Heart right ventricle (tissue), 16 donors: ENCODE measurements at regions of chr3 and their contacts with region 1.

Region 1: DNA sequence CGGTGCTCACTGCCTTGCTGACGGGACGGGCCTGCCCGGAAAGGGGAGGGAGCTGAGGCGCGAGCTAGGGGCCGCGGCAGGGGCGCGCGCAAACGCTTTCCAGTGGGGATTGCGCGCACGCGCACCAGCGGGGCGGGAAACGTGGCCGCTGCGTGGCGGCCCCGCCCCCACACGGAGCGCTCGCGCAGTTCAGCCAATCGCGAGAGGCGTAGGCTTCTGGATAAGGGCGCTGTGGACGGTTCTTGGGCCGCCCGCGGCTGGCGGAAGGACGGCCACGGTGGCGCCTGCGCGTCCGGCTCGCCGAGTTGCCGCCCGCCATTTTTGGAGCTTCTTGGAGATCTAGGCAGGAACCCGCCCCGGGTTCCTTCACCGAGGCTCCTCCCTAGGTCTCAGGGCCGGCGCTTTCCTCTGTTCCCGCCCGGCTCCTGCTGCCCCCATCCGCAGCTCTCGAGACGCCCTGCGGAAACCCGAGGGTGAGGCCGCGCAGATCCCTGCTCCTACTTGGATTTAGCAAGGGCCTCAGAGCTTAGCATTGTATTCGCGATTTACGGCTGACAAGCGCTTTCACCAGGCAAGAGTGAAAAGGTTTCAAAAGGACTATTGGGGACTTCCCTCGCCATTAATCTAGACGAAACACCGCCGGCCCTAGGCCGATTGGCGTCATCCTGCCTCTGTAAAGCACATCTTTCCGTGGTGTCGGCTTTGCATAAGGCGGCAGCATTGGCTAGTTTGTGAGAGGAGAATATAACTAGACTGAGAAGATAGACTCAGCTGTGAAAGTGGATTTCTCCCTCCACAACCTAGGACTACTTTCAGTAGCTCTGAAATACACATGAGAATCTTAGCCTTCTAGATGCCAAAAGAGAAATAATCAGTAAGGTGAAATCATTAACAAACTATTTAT is 496 bp upstream of the STAG1 start:
- DNase-seq: peak; percentile 98 to 99
- ATAC-seq: peak; percentile 94 to 99 (median 96)
- H3K4me3 ChIP-seq: peak overlapping the region; percentile 33 to 94 (median 71)
- H3K27ac ChIP-seq: peak overlapping the region; percentile 96 to 99 (median 98)
- H3K4me1 ChIP-seq: peaks cover 4 to 40% (median 30%) of the 10 kb centered on the region in 9 donors
- H3K27me3 ChIP-seq: no peaks in the 10 kb centered on the region
- CTCF ChIP-seq: peak in 4 of 9 donors; percentile 20 to 54 (median 46)

Region 2: GRCh38 chr3:135918580-135918962 is 834.1 kb before region 1 on chr3:
- intact Hi-C with region 1: loop called in 1 of 10 experiments (anchors 10 kb)
- DNase-seq: no peak
- ATAC-seq: peak in 5 of 8 donors; percentile 42 to 74 (median 66)
- H3K4me3 ChIP-seq: no peak overlapping the region
- H3K27ac ChIP-seq: no peak overlapping the region
- H3K4me1 ChIP-seq: peaks cover 0 to 10% (median 0%) of the 10 kb centered on the region in 9 donors
- H3K27me3 ChIP-seq: no peaks in the 10 kb centered on the region
- CTCF ChIP-seq: peak; percentile 20 to 66 (median 48)

Region 3: DNA sequence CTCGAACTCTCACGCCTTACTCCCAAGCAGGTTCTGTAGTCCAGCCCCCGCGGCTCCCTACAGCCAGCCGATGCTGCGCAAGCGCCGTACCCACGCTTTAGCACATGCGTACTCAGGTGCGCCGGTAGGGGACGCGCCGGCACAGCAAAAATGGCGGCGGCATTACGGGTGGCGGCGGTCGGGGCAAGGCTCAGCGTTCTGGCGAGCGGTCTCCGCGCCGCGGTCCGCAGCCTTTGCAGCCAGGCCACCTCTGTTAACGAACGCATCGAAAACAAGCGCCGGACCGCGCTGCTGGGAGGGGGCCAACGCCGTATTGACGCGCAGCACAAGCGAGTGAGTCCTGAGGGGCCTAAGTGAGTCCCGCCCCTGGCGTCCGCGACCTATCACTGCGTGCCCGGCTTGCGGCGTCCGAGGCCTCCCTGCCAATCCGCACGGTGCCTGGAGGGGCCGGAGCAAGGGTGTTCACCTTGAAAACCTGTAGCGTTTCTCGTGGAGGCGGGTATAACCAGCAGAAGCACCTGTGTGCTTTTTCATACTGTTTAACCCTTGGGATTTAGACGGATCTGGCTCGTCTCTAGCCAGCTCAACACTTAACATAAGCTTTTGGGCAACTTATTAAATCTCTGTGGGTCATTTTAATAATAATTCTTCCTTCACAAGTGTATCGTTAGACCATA is 502.3 kb before region 1 on chr3 and contains the start of gene PCCB:
- intact Hi-C with region 1: loop called in 2 of 10 experiments (anchors 5 to 10 kb)
- DNase-seq: peak; percentile 92 to 95
- ATAC-seq: peak; percentile 97 to 99 (median 99)
- H3K4me3 ChIP-seq: peak within 1 kb of the TSS; percentile 29 to 82 (median 70)
- H3K27ac ChIP-seq: peak within 1 kb of the TSS; percentile 66 to 95 (median 91)
- H3K4me1 ChIP-seq: peaks cover 0 to 23% (median 14%) of the 10 kb centered on the region in 9 donors
- H3K27me3 ChIP-seq: no peaks in the 10 kb centered on the region
- CTCF ChIP-seq: peak; percentile 65 to 96 (median 84)
- total RNA-seq, gene PCCB: 78.6 to 163 (median 132) TPM

Region 4: DNA sequence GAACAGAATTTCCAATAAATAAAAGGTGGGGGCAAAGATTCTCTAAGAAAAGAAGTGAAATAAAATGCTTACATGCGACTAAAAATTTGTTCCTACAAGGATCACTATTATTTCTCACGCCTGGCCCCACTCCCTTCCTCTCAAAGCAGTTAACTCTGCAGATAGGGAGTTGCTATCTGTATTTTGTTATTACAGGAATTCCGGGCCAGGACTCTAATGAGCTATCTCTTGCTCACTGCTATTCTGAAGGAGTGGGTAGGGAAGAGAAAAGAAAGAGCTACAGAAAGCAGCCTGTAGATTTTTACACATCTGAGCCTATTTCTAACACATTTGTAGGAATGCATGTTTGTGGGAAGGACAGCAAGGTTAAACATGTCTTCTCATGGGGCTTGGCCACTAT is 362.1 kb before region 1 on chr3:
- intact Hi-C with region 1: loop called in 9 of 10 experiments (anchors 1 to 10 kb)
- DNase-seq: no peak
- ATAC-seq: peak in 4 of 8 donors; percentile 25 to 69 (median 56)
- H3K4me3 ChIP-seq: no peak overlapping the region
- H3K27ac ChIP-seq: no peak overlapping the region
- H3K4me1 ChIP-seq: peaks cover 0 to 20% (median 0%) of the 10 kb centered on the region in 9 donors
- H3K27me3 ChIP-seq: no peaks in the 10 kb centered on the region
- CTCF ChIP-seq: no peak

Region 5: GRCh38 chr3:136818769-136819391 is 66.2 kb after region 1 on chr3 and contains the start of gene SLC35G2:
- intact Hi-C with region 1: loop called in 2 of 10 experiments (anchors 5 kb)
- DNase-seq: peak; percentile 61 to 72
- ATAC-seq: peak; percentile 75 to 93 (median 88)
- H3K4me3 ChIP-seq: peak within 1 kb of the TSS; percentile 59 to 77 (median 72)
- H3K27ac ChIP-seq: peak within 1 kb of the TSS; percentile 80 to 93 (median 90)
- H3K4me1 ChIP-seq: peaks cover 0 to 32% (median 17%) of the 10 kb centered on the region in 9 donors
- H3K27me3 ChIP-seq: peaks cover 0 to 43% (median 0%) of the 10 kb centered on the region in 7 donors
- CTCF ChIP-seq: peak in 4 of 9 donors; percentile 6 to 34 (median 28)
- total RNA-seq, gene SLC35G2: 1.7 to 5.1 (median 2.4) TPM

Region 6: GRCh38 chr3:136994772-136995516 is 242.3 kb after region 1 on chr3:
- intact Hi-C with region 1: loop called in 1 of 10 experiments (anchors 5 kb)
- DNase-seq: peak; percentile 77 to 84
- ATAC-seq: peak; percentile 75 to 97 (median 95)
- H3K4me3 ChIP-seq: no peak overlapping the region
- H3K27ac ChIP-seq: peak overlapping the region; percentile 67 to 89 (median 81)
- H3K4me1 ChIP-seq: peaks cover 4 to 26% (median 18%) of the 10 kb centered on the region in 9 donors
- H3K27me3 ChIP-seq: no peaks in the 10 kb centered on the region
- CTCF ChIP-seq: no peak

Region 7: GRCh38 chr3:138474163-138474562 is 1721.5 kb after region 1 on chr3:
- intact Hi-C with region 1: no loop called
- DNase-seq: no peak
- ATAC-seq: no peak
- H3K4me3 ChIP-seq: no peak overlapping the region
- H3K27ac ChIP-seq: no peak overlapping the region
- H3K4me1 ChIP-seq: peaks cover 0 to 29% (median 2%) of the 10 kb centered on the region in 9 donors
- H3K27me3 ChIP-seq: no peaks in the 10 kb centered on the region
- CTCF ChIP-seq: no peak